ENCODE measurements at regions of chr16 and their contacts with region 1.

Region 1: DNA sequence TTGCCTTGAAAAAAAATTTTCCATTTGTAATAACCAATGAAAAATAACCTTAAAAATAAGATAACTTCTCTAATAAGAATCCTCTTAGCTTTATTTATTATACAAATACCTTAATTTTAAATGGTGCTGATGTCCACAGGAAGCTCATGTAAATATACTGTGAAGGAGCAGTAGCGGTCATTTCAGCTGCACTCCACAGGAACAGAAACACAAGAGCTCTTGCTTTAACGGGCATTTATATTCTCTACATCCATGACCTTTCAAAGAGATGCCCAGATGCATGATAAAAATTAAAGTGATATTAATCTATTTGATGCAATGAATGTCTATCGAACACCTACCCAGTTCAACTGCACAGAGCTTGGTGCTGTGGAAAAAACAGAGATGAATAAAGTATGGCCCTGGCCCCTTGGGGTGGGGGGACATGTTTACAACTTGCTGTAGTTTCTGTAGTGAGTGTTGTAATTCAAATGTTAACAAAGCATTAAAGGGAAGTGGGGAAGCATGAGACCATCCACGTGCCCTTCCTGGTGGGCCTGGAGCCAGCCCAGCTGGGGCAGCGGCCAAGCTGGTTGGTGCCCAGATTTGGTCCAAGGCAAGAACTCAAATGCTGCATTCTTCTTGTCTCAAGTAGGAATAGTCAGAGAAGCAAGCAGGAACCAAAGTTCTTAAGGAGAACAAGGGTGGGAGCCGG is 47.9 kb downstream of the IQCK start:
- DNase-seq: peak in 2 of 3 donors; percentile 0 to 7
- H3K4me3 ChIP-seq: no peak overlapping the region
- H3K4me3 Mint-ChIP-seq: no peak overlapping the region
- H3K27ac ChIP-seq: no peak overlapping the region
- H3K27ac Mint-ChIP-seq: no peak overlapping the region
- H3K4me1 ChIP-seq: peaks cover 7 to 9% of the 10 kb centered on the region in 2 donors
- H3K4me1 Mint-ChIP-seq: peaks cover 14% of the 10 kb centered on the region
- H3K27me3 ChIP-seq: no peaks in the 10 kb centered on the region
- H3K27me3 Mint-ChIP-seq: no peaks in the 10 kb centered on the region
- CTCF ChIP-seq: no peak

Region 2: DNA sequence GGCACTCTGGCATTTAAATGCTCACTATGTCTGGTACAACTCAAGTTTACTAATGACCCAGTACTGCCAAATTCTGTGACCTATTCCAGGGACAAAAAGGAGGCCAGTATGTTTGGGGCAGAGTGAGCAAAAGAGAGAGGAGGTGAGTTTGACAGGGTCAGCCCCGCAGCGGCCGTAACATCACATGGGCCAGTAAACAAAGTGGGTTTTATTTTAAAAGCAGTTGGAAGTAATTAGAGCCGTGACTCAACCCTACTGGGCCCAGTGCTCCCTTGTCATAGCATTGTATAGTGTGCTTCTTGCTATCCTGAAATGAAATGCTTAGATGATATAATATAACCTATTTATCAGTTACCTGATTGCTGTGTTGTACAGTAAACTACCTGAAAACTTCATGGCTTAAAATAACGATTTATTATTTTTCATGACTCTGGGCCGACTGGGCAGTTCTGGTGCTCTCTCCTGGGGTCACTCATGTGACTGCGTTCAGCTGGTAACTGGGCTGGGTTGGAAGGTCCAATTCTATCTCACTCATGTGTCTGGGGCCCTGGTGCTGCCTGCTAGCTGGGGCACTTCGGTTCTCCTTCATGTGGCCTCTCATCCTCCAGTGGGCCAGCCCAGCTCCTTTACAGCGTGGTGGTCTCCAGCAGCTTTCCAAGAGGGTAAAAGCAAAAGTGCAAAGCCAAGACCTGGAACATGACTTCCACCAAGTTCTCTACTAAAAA is 20.6 kb before region 1 on chr16:
- intact Hi-C with region 1: no loop called
- DNase-seq: no peak
- H3K4me3 ChIP-seq: no peak overlapping the region
- H3K4me3 Mint-ChIP-seq: no peak overlapping the region
- H3K27ac ChIP-seq: no peak overlapping the region
- H3K27ac Mint-ChIP-seq: no peak overlapping the region
- H3K4me1 ChIP-seq: no peaks in the 10 kb centered on the region
- H3K4me1 Mint-ChIP-seq: no peaks in the 10 kb centered on the region
- H3K27me3 ChIP-seq: no peaks in the 10 kb centered on the region
- H3K27me3 Mint-ChIP-seq: peaks cover 0 to 3% (median 0%) of the 10 kb centered on the region in 3 donors
- CTCF ChIP-seq: no peak

Region 3: DNA sequence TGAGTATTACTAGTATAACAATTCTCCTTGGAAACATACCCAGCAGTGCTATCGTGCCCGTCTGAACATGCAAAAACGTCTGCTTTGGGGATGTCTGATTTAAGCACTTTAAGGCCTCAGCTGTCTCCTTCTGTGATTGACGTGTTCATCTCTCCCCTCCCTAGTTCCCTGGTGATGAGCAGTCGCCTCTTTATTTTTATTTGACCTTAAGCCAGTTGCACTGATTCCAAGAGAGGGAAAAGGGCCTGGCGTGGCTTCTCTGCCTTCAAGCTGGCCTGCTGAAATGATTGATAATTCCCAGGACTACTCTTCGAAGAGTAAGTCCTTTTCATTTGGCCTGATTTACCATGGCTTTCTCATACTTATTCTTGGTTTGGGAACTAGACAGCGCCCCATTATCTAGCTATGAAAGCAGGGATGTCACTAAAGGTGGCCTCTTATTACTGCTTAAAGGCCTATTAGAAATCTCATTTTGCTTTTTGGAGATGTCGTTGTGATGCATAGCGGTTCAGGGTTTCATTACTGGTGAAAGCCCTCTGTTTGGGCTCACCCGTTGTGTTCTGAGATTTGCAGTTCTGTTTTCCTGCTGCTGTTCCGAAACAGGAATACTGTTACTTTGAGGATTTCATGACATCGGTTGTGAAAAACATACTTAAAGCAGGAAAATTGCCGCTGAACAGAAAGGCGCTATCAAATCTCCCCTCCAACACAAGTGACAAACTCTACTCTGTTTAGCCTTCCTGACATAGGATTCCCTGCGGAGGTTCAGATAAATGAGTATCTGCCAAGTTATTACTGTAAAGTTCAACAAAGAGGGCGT is 17.6 kb after region 1 on chr16:
- intact Hi-C with region 1: loop called in 1 of 2 experiments (anchors 2 kb)
- DNase-seq: no peak
- H3K4me3 ChIP-seq: no peak overlapping the region
- H3K4me3 Mint-ChIP-seq: no peak overlapping the region
- H3K27ac ChIP-seq: no peak overlapping the region
- H3K27ac Mint-ChIP-seq: no peak overlapping the region
- H3K4me1 ChIP-seq: no peaks in the 10 kb centered on the region
- H3K4me1 Mint-ChIP-seq: peaks cover 2% of the 10 kb centered on the region
- H3K27me3 ChIP-seq: no peaks in the 10 kb centered on the region
- H3K27me3 Mint-ChIP-seq: peaks cover 0 to 1% (median 0%) of the 10 kb centered on the region in 3 donors
- CTCF ChIP-seq: no peak

Region 4: DNA sequence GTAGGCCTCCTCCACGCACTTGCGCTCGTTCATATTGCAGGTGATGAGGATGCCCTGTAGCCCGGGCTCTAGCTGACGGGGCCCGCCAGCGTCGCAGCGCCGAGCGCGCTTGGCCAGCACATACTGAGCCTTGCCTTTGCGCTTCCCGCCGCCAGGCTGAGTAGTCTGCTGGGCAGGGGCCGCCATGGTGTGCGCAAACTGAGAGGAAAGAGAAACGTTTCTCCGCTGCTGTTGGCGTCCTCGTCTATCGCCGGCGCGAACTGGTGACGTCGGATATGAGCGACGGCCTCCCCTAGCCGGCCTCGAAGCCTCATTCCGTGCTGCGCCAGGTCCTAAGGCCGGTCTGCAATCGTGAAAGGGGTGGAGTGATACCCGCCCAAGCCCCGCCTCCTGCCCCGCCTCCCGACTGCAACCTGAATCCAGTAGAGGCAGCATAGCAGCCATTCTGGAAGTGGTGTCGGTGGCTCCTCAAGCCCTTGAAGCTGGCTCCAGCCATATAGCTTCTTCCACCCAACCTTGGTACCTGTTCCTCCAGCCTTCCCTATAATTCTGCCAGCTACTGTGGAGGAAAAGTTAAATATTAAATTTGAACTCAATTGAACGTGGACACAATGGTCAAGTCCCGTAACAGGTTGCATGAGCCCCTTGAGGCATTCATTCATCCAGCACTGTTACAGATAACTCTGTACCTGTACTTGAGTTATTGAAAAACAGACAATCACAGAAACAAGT is 975.7 kb after region 1 on chr16 and contains the start of gene THUMPD1:
- intact Hi-C with region 1: no loop called
- DNase-seq: peak; percentile 94 to 96 (median 96)
- H3K4me3 ChIP-seq: peak within 1 kb of the TSS; percentile 84 to 97 (median 94)
- H3K4me3 Mint-ChIP-seq: peak within 1 kb of the TSS; percentile 94 to 99
- H3K27ac ChIP-seq: peak within 1 kb of the TSS; percentile 96 to 98
- H3K27ac Mint-ChIP-seq: peak within 1 kb of the TSS; percentile 95 to 98 (median 96)
- H3K4me1 ChIP-seq: peaks cover 44 to 50% of the 10 kb centered on the region in 2 donors
- H3K4me1 Mint-ChIP-seq: peaks cover 37% of the 10 kb centered on the region
- H3K27me3 ChIP-seq: no peaks in the 10 kb centered on the region
- H3K27me3 Mint-ChIP-seq: no peaks in the 10 kb centered on the region
- CTCF ChIP-seq: no peak
- polyA plus RNA-seq, gene THUMPD1: 16.1 to 32.2 (median 23.5) TPM